ENCODE measurements at regions of chr19 and their contacts with region 1.

Region 1: DNA sequence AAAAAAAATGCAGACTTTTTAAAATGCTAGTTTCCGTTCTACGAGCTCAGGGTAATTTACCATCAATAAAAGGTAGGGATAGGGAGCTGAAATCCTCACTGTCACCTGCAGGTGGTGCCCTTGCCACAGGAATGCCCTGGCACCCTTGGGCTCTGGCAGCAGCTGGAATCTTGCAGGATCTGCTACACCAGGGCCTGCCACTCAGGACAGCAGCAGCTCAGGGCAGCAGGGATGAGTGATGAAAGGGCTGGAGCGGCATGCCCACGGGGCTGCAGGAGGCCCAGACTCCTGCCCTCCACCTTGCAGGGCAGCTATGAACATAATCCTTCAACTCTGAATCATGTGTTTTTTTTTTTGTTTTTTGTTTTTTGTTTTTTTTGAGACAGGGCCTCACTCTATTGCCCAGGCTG is 54.0 kb downstream of the GNG7 start:
- DNase-seq: peak; percentile 59 to 74
- H3K4me3 ChIP-seq: no peak overlapping the region
- H3K27ac ChIP-seq: no peak overlapping the region
- H3K4me1 ChIP-seq: no peaks in the 10 kb centered on the region
- H3K27me3 ChIP-seq: peaks cover 9% of the 10 kb centered on the region
- CTCF ChIP-seq: peak; percentile 89

Region 2: GRCh38 chr19:2750808-2751443 is 102.4 kb after region 1 on chr19:
- CTCF ChIA-PET with region 1: no interaction called
- POLR2A ChIA-PET with region 1: no interaction called
- intact Hi-C with region 1: loop called (anchors 1 kb)
- DNase-seq: no peak
- H3K4me3 ChIP-seq: no peak overlapping the region
- H3K27ac ChIP-seq: no peak overlapping the region
- H3K4me1 ChIP-seq: no peaks in the 10 kb centered on the region
- H3K27me3 ChIP-seq: peaks cover 6% of the 10 kb centered on the region
- CTCF ChIP-seq: no peak